ENCODE measurements at regions of chr1 and their contacts with region 1.

Region 1: GRCh38 chr1:225911191-225912130 is 12.6 kb downstream of the PYCR2 start:
- DNase-seq: peak; percentile 82
- CTCF ChIP-seq: peak; percentile 79

Region 2: DNA sequence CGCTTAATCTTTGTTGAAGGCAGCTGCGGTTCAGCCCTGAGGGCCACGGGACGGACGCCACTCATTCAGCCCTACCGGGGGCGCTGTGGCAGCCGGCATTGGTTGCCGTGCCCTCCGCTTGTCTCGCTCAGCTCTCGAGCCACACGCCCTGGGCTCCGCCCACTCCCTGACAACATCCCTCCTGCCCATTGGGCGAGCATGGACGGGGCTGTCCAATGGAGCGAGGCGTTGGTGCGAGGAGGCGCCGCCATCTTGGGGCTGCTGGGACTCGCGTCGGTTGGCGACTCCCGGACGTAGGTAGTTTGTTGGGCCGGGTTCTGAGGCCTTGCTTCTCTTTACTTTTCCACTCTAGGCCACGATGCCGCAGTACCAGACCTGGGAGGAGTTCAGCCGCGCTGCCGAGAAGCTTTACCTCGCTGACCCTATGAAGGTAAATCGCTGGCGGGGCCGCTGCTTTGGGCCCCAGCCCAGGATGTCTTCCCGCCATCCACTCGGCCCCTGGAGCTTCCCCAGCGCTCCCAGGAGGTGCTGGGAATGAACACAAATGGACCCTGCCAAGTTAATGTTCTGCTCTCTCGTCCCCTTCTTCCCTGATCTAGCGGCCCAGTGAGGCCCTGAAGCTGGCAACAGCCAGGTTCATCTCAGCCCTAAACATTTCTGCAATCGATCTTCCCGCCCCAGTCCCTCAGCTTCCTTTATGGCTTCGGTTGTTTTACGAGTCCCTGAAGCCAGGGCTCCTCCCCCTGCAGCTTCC is 133.7 kb before region 1 on chr1 and contains the start of gene SRP9:
- CTCF ChIA-PET with region 1: interaction called, 20 read pairs
- POLR2A ChIA-PET with region 1: no interaction called
- DNase-seq: peak; percentile 98
- CTCF ChIP-seq: peak; percentile 95

Region 3: DNA sequence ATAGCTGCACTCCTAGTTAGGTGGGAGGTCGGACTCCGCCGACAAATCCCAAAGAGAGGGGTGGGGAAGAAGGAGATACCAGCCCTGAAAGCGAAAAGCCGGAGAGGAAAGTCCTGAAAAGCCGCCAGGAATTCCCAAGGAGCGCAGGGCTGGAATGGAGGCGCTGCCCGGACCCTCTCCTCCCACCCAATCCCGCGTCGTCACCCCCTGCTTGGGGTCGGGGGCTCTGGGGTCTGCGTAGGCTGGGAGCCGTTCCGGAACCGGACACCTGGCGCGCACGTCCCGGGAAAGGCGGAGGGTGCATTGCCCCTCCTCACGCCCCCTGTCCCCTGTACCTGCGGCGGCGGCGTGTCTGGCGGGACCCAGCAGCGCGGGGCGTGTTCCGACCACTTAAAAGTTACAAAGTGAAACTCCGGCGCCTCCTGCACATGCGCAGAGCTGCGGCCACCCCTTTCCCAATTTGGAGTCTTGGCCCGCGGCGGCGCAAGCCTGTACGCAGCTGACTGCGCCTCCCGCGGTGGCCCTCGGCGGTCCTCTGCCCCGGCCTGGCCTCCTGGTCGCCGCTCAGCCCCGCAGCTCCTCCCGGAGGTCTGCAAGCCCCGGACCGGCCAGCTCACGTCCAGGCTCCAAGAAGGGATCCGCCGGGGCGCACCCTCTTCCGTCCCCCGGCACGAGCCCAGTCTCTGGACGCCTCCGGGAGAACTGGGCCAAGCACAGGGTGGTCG is 29.3 kb before region 1 on chr1 and contains the start of gene TMEM63A:
- CTCF ChIA-PET with region 1: interaction called, 34 read pairs
- POLR2A ChIA-PET with region 1: no interaction called
- DNase-seq: peak; percentile 96
- CTCF ChIP-seq: peak; percentile 34

Region 4: DNA sequence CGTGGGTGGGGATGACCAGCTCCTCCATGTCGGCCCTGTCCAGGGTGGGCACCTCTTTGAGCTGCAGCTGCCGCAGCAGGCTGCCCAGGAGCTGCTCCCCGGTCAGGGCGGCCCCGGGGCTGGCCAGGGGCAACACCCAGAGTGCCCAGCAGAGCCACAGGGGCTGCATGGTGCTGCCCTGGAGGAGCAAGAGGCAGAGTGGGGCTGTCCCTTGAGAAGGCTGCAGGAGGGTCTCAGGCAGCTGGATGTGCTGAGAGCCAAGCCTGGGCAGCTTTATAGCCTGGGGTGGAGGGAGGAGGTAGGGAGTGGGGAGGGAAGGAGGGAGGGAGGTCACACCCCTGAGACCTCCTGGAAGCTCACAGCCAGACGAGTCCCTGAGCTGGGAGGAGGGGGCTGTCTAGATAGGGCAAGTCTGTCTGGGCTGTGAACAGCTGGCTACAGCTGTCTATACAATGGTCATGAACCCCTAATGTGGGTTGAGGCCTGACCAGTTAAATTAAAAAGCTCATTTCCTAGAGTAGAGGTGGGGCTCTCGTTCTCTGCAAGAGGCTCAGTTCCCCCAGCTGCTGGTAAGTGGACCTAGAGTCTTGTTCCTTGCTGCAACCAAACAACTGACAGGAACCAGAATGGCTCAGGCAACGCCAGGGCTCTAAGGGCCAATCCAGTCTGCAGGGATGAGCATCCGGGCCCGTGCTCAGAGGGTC is 22.4 kb before region 1 on chr1 and contains the start of gene LEFTY1:
- CTCF ChIA-PET with region 1: interaction called, 11 read pairs
- POLR2A ChIA-PET with region 1: no interaction called
- DNase-seq: no peak
- CTCF ChIP-seq: no peak

Region 5: GRCh38 chr1:225923692-225924555 is 12.5 kb after region 1 on chr1 and contains the start of gene PYCR2:
- CTCF ChIA-PET with region 1: interaction called, 43 read pairs
- POLR2A ChIA-PET with region 1: interaction called, 3 read pairs
- DNase-seq: peak; percentile 100
- CTCF ChIP-seq: no peak

Region 6: DNA sequence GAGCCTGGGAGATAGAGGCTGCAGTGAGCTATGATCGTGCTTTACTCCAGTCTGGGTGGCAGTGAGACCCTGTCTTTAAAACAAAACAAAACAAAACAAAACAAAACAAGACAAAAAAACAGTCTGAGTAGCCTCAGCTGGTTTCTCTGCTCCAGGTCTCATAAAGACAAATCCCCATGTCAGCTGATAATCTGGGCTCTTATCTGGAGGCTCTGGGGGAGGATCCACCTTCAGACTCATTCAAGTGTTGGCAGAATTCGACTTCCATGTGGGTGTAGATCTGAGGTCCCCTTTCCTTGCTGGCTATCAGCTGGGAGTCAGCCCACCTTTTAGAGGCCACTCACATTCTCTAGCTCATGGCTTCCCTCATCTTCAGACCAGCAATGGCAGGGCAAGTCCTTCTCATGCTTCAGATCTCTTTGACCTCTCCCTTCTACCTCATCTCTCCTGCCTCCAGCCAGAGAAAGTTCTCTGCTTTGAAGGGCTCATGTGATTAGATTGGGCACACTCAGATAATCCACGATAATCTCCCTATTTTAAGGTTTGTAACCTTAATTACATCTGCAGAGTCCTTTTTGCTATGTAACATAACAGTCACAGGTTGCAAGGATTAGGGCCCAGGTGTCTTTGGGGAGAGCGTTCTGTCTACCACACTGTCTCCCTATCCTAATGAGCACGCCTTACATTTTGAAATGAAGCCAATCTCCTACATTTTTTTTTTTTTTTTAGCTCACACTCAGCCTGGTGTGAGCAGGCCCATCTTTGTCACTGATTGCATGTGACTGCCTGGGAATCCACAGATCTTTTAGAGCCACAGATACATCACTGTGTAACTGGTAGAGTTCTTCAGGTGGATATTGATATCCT is 20.0 kb after region 1 on chr1:
- CTCF ChIA-PET with region 1: interaction called, 12 read pairs
- POLR2A ChIA-PET with region 1: no interaction called
- DNase-seq: no peak
- CTCF ChIP-seq: no peak

Region 7: DNA sequence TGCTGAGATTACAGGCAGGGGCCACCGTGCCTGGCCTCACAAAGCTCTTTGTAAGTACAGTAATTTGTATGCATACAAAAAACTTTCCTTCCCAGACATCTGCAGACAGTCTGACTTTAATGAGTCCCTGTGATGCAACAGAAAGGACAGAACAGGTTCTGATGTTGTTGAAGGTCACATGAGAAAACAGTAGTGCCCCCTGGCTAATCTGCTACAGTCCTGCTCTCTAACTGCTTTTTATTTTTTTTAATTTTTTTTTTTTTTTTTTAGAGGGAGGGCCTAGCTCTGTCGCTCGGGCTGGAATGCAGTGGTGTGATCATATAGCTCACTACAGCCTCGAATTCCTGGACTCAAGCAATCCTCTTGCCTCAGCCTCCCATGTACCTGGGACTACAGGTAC is 238.3 kb after region 1 on chr1:
- CTCF ChIA-PET with region 1: no interaction called
- POLR2A ChIA-PET with region 1: no interaction called
- DNase-seq: no peak
- CTCF ChIP-seq: no peak

Measured in GM10248 (cell line).